ENCODE measurements at regions of chr2 and their contacts with region 1.

Region 1: GRCh38 chr2:11344342-11344955 is at the start of gene ROCK2:
- DNase-seq: peak; percentile 43 to 87
- H3K4me3 ChIP-seq: peak within 1 kb of the TSS; percentile 74 to 92 (median 82)
- H3K27ac ChIP-seq: peak within 1 kb of the TSS; percentile 81
- H3K4me1 ChIP-seq: peaks cover 0 to 6% (median 3%) of the 10 kb centered on the region in 4 experiments; a peak in 5 of 7 replicates
- H3K27me3 ChIP-seq: no peaks in the 10 kb centered on the region; a peak in 1 of 7 replicates
- CTCF ChIP-seq: no peak
- EP300 ChIP-seq: no peak
- POLR2A ChIP-seq: peak; percentile 44 to 48; a peak in 2 of 3 replicates
- RAD21 ChIP-seq: no peak
- total RNA-seq, gene ROCK2: 28.8 and 29.0 TPM in 2 replicates

Region 2: GRCh38 chr2:11320698-11321492 is 23.6 kb before region 1 on chr2:
- CTCF ChIA-PET with region 1: interaction called, 3 read pairs
- POLR2A ChIA-PET with region 1: interaction called, 10 read pairs
- DNase-seq: no peak
- H3K4me3 ChIP-seq: no peak overlapping the region
- H3K27ac ChIP-seq: no peak overlapping the region
- H3K4me1 ChIP-seq: no peaks in the 10 kb centered on the region
- H3K27me3 ChIP-seq: no peaks in the 10 kb centered on the region
- CTCF ChIP-seq: peak in 1 of 3 experiments; percentile 25; a peak in 1 of 4 replicates
- EP300 ChIP-seq: no peak
- POLR2A ChIP-seq: no peak
- RAD21 ChIP-seq: peak in 1 of 2 experiments; percentile 28; a peak in 1 of 4 replicates

Region 3: DNA sequence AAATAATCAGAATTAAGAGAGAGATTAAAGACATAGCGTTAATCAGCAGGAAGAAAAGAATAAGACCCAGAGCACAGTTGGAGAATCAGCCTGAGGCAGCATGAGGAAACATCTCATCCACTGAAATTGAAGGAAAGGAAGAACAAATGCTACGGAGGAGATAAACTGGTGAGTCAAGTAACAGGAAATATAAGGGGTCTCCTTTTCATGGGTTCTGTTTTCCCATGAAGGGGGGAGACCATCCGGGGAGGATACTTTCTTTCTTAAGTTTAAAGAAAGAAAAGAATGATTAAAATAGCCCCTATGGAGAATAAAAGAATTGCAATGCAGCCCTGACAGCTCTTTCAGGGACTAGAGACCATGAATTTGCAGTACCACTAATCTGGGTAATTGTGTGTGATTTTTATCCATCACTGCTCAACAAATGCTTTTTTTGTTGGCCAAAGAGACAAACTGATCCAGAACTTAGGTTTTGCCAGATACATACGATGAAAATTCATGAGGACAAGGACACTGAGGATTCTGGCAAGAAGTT is 17.7 kb before region 1 on chr2:
- CTCF ChIA-PET with region 1: interaction called, 3 read pairs
- POLR2A ChIA-PET with region 1: interaction called, 10 read pairs
- DNase-seq: no peak
- H3K4me3 ChIP-seq: no peak overlapping the region
- H3K27ac ChIP-seq: no peak overlapping the region
- H3K4me1 ChIP-seq: no peaks in the 10 kb centered on the region
- H3K27me3 ChIP-seq: no peaks in the 10 kb centered on the region
- CTCF ChIP-seq: no peak
- EP300 ChIP-seq: no peak
- POLR2A ChIP-seq: no peak
- RAD21 ChIP-seq: no peak

Region 4: DNA sequence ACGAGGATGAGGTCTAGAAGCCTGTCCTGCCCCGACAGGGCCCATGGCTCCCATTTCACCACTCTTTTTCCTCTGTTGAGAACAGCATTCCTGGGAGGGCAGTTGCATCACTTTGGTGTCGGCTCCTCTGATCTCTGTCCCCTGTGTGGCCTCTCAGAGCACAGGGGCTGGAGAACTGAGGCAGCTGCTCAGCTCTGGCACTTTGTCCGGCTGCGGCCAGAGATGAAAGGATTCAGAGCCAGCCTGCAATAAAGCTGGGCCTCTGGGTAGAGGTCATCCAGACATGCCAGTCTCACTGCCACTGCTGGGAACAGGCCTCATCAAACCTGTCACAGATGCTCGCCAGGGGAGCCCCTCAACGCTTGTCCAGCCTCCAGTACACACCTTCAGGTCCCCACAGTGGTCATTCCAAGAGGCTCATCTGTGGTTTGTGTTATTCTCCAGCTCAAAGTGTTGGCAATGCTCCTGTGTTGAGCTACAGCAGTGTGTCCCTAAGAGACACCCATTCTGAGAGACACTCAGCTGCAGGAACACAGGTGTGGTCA is 13.1 kb after region 1 on chr2:
- CTCF ChIA-PET with region 1: interaction called, 3 read pairs
- POLR2A ChIA-PET with region 1: interaction called, 10 read pairs
- DNase-seq: no peak
- H3K4me3 ChIP-seq: no peak overlapping the region
- H3K27ac ChIP-seq: no peak overlapping the region
- H3K4me1 ChIP-seq: no peaks in the 10 kb centered on the region
- H3K27me3 ChIP-seq: no peaks in the 10 kb centered on the region; a peak in 1 of 7 replicates
- CTCF ChIP-seq: no peak
- EP300 ChIP-seq: no peak
- POLR2A ChIP-seq: no peak
- RAD21 ChIP-seq: no peak

Region 5: DNA sequence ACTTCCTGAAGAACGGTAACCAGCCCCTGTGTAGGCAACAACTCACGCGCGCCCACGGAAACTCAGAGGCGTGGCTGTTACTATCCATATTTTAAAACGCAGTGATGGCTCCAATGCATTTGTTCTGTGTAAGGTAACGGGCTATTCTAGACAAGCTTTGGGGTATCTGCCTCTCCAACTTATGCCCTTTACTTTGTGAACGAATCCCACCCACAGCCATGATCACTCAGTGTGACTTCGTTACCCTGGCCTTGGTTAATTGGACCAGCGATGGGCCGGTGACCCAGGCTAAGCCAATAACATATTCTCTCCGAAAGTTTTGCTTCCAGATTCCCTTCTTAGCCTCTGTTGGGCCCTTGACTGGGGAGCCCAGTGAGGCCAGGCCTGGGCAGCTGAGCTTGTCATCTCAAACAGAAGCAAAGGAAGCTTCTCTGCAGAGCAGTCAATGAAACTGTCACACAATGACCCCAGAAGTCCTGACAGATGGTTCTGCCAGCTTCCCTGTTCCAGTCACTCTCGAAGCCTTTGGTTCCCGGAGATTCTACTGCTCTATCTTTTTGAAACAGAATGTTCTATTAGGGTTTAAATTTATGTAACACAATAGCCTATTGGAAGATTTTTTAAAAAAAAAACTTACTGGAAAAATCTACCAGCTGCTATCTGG is 30.7 kb after region 1 on chr2:
- CTCF ChIA-PET with region 1: interaction called, 10 read pairs
- POLR2A ChIA-PET with region 1: interaction called, 4 read pairs
- DNase-seq: no peak
- H3K4me3 ChIP-seq: no peak overlapping the region
- H3K27ac ChIP-seq: no peak overlapping the region
- H3K4me1 ChIP-seq: peaks cover 0 to 6% (median 4%) of the 10 kb centered on the region in 4 experiments; a peak in 5 of 7 replicates
- H3K27me3 ChIP-seq: no peaks in the 10 kb centered on the region
- CTCF ChIP-seq: no peak
- EP300 ChIP-seq: no peak
- POLR2A ChIP-seq: no peak
- RAD21 ChIP-seq: no peak

Region 6: GRCh38 chr2:11438555-11439080 is 94.2 kb after region 1 on chr2:
- CTCF ChIA-PET with region 1: no interaction called
- POLR2A ChIA-PET with region 1: no interaction called
- DNase-seq: no peak
- H3K4me3 ChIP-seq: no peak overlapping the region
- H3K27ac ChIP-seq: no peak overlapping the region
- H3K4me1 ChIP-seq: no peaks in the 10 kb centered on the region
- H3K27me3 ChIP-seq: no peaks in the 10 kb centered on the region
- CTCF ChIP-seq: no peak
- EP300 ChIP-seq: no peak
- POLR2A ChIP-seq: no peak
- RAD21 ChIP-seq: no peak